GM10248 (cell line): ENCODE measurements at regions of chr20 and their contacts with region 1.

Region 1: DNA sequence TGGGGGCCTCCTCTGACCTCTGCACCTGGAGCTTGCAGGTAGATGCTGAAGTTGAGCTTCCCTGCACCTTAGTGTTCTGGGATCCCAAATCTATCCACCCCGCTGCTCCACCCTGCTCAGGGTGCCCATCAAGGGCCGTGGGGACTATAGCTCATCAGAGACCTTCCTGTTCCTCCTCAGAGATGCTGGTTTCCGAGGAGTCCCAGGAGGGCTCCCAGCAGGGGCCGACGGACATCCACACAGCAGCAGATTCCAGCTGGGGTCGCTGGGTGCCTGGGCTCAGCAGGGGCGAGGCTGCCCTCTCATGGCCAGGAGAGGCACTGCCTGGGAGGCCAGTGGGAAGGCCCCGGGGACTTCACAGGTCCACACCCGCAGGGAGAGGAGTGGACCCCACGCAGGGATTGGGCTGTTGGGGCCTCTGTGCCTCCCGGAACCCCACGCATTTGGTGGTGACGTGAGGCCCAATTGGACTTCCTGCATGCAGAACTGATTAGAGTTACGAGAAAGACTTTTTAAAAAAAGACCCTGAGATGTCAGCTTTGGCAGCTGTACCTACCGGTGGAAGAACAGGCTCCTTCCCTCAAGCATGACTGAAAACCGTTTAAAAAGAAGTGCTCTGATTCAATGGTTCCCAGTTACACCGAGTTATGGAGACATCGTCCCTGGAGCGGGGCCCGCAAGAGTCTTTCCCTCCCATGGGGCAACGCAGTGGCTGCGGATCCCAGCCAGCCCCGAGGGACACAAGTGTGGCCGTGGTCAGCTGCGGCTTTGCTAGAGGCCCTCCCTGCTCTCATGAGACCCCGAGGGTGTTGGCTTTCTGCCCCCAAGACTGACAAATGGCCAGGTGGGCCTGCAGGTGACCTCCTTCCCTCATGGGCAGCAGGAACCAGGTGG is 25.3 kb upstream of the SLCO4A1 start:
- DNase-seq: peak; percentile 90
- CTCF ChIP-seq: peak; percentile 98

Region 2: GRCh38 chr20:62437927-62438326 is 179.0 kb before region 1 on chr20:
- CTCF ChIA-PET with region 1: no interaction called
- POLR2A ChIA-PET with region 1: no interaction called
- DNase-seq: no peak
- CTCF ChIP-seq: no peak

Region 3: DNA sequence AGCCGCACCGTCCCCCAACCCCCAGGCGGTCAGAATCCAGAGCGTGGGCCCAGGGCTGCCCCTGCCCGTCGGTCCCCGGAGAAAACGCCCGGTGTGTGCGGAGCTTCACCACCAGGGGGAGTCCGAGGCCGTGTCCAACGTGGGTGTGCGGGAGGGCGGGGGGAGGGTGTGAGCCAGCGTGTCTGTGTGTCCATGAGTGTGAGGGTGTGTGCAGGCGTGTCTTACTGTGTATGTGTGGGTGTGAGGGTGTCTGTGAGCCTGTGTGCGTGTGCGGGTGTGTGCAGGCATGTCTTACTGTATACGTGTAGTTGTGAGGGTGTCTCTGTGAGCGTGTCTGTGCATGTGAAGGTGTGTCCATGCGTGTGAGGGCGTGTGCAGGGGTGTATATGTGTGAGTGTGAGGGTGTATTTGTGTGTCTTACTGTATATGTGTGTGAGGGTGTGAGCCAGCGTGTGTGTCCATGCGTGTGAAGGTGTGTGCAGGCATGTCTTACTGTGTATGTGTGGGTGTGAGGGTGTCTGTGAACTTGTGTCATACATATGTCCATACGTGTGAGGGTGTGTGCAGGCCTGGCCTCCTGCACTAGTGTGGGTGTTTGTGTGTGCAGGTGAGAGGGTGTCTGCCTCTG is 116.6 kb before region 1 on chr20:
- CTCF ChIA-PET with region 1: interaction called, 26 read pairs
- POLR2A ChIA-PET with region 1: no interaction called
- DNase-seq: peak; percentile 85
- CTCF ChIP-seq: peak; percentile 88

Region 4: GRCh38 chr20:62551407-62552323 is 65.3 kb before region 1 on chr20:
- CTCF ChIA-PET with region 1: no interaction called
- POLR2A ChIA-PET with region 1: no interaction called
- DNase-seq: no peak
- CTCF ChIP-seq: no peak

Region 5: DNA sequence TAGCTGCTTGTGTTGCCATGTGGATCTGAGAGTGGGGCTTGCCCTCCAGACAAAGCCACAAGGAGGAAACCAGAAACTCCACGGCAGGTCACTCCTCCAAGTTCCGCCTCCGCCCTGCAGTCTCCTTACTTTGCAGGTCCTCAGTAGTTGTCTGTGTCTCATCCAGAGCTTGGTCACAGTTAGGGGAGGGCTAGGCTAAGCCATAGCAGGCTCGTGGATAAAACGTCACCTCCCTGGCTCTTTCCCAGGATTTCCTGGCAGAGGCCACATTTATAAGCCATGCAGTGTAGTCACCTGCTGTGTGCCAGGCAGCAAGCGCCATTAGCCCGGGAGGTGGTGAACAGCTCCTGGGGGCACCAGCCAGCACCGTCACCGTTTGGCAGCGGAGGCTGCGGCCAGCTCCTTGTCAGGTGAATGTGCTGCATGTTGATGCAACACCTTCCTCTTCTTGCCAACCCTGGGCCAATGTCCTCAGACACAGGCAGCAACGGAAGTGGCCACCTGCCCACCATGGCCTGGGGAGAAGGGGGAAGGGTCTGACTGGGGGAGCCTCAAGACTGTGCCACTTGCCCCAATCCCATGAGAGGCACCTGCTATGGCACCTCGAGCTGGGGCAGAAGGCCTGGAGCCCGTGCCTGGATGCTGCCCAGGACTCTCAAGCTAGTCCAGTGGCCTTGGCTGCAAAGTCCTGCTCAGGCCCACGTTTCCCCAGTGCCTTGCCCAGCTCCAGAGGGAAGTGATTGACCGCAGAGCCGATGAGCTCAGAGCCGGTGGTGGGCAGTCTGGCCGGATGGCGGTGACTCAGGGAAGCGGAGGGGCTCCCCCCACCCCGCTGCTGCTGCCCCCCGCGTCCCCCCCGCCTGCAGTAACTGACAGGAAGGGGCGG is 13.7 kb before region 1 on chr20:
- CTCF ChIA-PET with region 1: interaction called, 15 read pairs
- POLR2A ChIA-PET with region 1: interaction called, 3 read pairs
- DNase-seq: peak; percentile 75
- CTCF ChIP-seq: no peak

Region 6: GRCh38 chr20:62627901-62628612 is 11.1 kb after region 1 on chr20:
- CTCF ChIA-PET with region 1: interaction called, 15 read pairs
- POLR2A ChIA-PET with region 1: no interaction called
- DNase-seq: peak; percentile 56
- CTCF ChIP-seq: no peak

Region 7: DNA sequence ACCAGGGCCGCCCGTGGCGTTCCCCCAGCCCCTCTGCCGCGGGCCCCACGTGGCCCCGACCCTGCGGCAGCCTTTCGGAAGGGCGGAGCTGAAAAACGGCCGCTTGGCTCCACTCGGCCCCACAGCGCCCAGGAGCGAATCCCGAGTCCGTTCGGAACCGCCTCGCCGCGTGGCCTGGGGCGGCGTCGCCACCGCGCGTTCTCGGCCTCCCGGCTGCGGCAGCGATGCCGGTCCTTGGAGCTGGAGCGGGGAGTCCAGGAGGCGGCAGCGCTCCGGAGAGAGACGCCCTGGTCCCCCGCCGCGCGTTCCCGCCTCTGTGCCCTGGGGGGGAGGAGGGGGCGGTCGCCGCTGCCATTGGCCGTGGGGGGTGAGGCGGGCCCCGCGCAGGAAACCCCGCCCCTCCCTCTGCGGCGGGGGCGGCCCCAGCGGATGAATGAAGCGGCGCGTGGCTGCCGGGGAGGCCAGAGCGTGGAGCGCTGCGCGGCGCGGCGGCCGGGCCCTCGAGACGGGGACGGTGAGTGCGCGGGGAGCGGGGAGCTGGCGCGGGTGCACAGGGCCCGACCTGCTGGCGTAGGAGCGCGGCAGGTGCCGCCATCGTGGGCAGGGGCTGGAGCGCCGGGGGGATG is 25.2 kb after region 1 on chr20 and contains the start of gene SLCO4A1:
- CTCF ChIA-PET with region 1: interaction called, 10 read pairs
- POLR2A ChIA-PET with region 1: interaction called, 3 read pairs
- DNase-seq: peak; percentile 94
- CTCF ChIP-seq: no peak